Heart left ventricle (tissue), 16 donors: ENCODE measurements at regions of chr11 and their contacts with region 1.

Region 1: DNA sequence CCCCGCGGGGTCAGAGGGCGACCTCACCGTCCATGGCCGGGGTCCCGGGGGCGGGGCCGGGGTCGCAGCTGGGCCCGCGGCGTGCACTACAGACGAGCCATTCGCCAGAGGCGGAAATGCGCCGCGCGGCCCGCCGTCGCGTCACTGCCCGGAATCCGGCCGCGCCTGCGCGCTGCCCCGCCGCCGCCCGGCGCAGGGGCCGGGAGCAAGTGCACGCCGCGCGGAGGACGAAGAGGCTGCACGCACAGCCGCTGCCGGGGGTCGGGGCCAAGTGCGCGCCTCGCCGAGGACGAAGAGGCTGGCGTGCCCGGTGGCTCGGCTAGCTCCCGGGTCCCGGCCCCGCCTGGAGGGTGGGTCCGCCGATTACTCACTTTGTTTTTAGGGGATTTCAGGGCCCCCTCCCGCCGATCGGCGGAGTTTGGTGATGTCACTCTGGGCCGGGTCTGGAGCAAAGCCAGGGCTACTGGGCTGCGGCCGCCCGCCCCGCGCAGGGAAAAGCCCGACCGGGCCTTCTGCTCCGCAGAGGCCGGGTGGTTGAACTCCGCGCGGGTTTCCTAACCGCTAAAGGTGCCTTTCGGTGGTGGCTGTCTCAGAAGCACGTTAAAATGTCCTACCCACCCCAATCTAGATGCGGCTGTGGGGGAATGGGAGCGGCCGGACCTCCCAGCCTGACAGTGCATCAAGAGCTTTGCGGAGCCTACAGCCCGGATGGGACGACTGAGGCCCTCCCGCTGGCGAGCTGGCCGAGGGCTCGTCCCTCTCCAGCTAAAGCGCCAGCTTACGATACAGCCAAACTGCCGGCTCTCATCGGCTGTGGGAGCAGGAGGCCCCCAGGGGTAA is at the start of gene RELA:
- DNase-seq: peak; percentile 94 to 97 (median 96)
- ATAC-seq: peak; percentile 87 to 93 (median 90)
- H3K4me3 ChIP-seq: peak within 1 kb of the TSS; percentile 46 to 100 (median 94)
- H3K27ac ChIP-seq: peak within 1 kb of the TSS; percentile 91 to 100 (median 99)
- H3K4me1 ChIP-seq: peaks cover 5 to 35% (median 25%) of the 10 kb centered on the region in 12 donors
- H3K27me3 ChIP-seq: no peaks in the 10 kb centered on the region
- CTCF ChIP-seq: peak in 1 of 12 donors; percentile 11
- POLR2A ChIP-seq: peak in 1 of 2 donors; percentile 84
- total RNA-seq, gene RELA: 31.2 to 86.4 (median 42.3) TPM

Region 2: GRCh38 chr11:65569973-65570918 is 92.8 kb before region 1 on chr11 and contains the start of gene ZNRD2:
- intact Hi-C with region 1: loop called in 1 of 10 experiments (anchors 5 kb)
- DNase-seq: peak; percentile 98 to 99 (median 99)
- ATAC-seq: peak; percentile 85 to 92 (median 90)
- H3K4me3 ChIP-seq: peak within 1 kb of the TSS; percentile 56 to 96 (median 82)
- H3K27ac ChIP-seq: peak within 1 kb of the TSS; percentile 64 to 99 (median 95)
- H3K4me1 ChIP-seq: peaks cover 17 to 77% (median 55%) of the 10 kb centered on the region in 12 donors
- H3K27me3 ChIP-seq: peaks cover 0 to 6% (median 0%) of the 10 kb centered on the region in 9 donors
- CTCF ChIP-seq: peak in 11 of 12 donors; percentile 33 to 71 (median 55)
- POLR2A ChIP-seq: peak in 1 of 2 donors; percentile 72
- total RNA-seq, gene ZNRD2: 23.2 to 63.6 (median 33.9) TPM

Region 3: GRCh38 chr11:65637794-65638317 is 25.2 kb before region 1 on chr11 and contains the start of gene SIPA1:
- intact Hi-C with region 1: loop called in 1 of 10 experiments (anchors 1 kb)
- DNase-seq: peak; percentile 85 to 91 (median 86)
- ATAC-seq: peak; percentile 70 to 86 (median 82)
- H3K4me3 ChIP-seq: peak within 1 kb of the TSS; percentile 47 to 95 (median 81)
- H3K27ac ChIP-seq: peak within 1 kb of the TSS; percentile 85 to 99 (median 94)
- H3K4me1 ChIP-seq: peaks cover 0 to 68% (median 39%) of the 10 kb centered on the region in 12 donors
- H3K27me3 ChIP-seq: no peaks in the 10 kb centered on the region
- CTCF ChIP-seq: peak in 11 of 12 donors; percentile 29 to 69 (median 56)
- POLR2A ChIP-seq: peak in 1 of 2 donors; percentile 93
- total RNA-seq, gene SIPA1: 17.0 to 63.3 (median 21.6) TPM

Region 4: DNA sequence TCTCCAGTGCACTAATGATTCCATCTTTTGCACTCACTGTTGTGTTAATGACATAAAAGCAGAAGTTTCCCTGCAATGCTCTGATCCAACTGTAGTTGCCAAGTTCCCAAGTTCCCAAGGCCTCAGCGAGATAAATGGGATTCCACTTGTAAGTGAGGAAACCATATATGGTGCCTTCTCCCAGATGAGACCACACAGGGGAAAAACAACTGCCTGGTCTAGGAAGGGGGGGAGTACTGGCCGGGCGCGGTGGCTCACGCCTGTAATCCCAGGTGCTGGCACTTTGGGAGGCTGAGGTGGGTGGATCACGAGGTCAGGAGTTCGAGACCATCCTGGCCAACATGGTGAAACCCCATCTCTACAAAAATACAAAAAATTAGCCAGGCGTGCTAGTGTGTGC is 23.0 kb after region 1 on chr11:
- intact Hi-C with region 1: loop called in 1 of 10 experiments (anchors 2 kb)
- DNase-seq: no peak
- ATAC-seq: peak in 2 of 4 donors; percentile 61 to 86
- H3K4me3 ChIP-seq: no peak overlapping the region
- H3K27ac ChIP-seq: peak overlapping the region in 3 of 12 donors; percentile 4 to 18 (median 13)
- H3K4me1 ChIP-seq: peaks cover 0 to 8% (median 0%) of the 10 kb centered on the region in 12 donors
- H3K27me3 ChIP-seq: no peaks in the 10 kb centered on the region
- CTCF ChIP-seq: no peak
- POLR2A ChIP-seq: no peak

Region 5: DNA sequence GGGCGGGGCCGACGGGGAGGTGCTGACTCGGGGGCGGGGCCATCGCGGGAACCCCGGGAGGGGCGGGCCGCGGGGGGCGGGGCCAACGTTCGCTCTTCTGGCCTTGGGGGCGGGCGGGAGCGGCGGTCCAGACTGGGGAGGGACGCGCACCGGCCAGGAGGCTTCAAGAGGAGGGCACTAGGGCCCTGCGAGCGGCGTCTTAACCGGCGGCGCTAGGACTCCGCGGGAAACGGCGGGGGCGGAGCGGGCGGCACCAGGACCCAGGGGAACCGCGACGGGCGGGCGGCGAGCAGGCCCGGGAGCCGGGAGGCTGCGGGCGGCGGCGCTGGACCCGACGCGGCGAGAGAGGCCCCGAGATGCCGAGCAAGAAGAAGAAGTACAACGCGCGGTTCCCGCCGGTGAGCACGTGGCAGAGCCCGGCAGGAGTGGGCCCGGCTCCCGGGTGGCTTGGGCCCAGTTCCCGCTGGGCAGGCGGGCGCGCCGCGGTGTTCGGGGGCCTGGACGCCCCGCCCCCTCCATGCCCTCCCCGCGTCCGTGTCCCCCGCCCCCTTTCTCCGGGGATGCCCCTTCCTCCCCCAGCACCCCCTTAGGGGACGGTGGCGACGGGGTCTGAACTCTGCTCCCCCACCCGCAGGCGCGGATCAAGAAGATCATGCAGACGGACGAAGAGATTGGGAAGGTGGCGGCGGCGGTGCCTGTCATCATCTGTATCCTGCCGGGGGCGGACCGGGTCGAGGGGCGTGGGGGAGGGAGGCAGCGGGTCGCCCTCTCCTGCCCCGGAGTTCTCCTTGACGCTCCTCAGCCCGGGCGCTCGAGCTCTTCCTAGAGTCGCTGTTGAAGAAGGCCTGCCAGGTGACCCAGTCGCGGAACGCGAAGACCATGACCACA is 256.4 kb after region 1 on chr11 and contains the start of gene DRAP1:
- intact Hi-C with region 1: loop called in 1 of 10 experiments (anchors 1 kb)
- DNase-seq: peak; percentile 99 to 100 (median 99)
- ATAC-seq: peak; percentile 92 to 96 (median 94)
- H3K4me3 ChIP-seq: peak within 1 kb of the TSS; percentile 85 to 100 (median 96)
- H3K27ac ChIP-seq: peak within 1 kb of the TSS; percentile 95 to 100 (median 97)
- H3K4me1 ChIP-seq: peaks cover 16 to 55% (median 48%) of the 10 kb centered on the region in 12 donors
- H3K27me3 ChIP-seq: no peaks in the 10 kb centered on the region
- CTCF ChIP-seq: peak in 2 of 12 donors; percentile 15 to 25
- POLR2A ChIP-seq: peak; percentile 38 to 79
- total RNA-seq, gene DRAP1: 76.5 to 144 (median 96.9) TPM